ENCODE measurements at regions of chr12 and their contacts with region 1.

Region 1: GRCh38 chr12:7989827-7990551 is 42.5 kb upstream of the FOXJ2 start:
- DNase-seq: peak; percentile 52 to 75
- ATAC-seq: peak; percentile 92 to 98 (median 95)
- H3K4me3 ChIP-seq: no peak overlapping the region
- H3K4me3 Mint-ChIP-seq: peak overlapping the region; percentile 76
- H3K27ac ChIP-seq: peak overlapping the region; percentile 57
- H3K27ac Mint-ChIP-seq: peak overlapping the region; percentile 69 to 86
- H3K4me1 ChIP-seq: peaks cover 15% of the 10 kb centered on the region
- H3K4me1 Mint-ChIP-seq: peaks cover 20 to 21% of the 10 kb centered on the region in 2 donors
- H3K27me3 ChIP-seq: no peaks in the 10 kb centered on the region
- H3K27me3 Mint-ChIP-seq: no peaks in the 10 kb centered on the region
- CTCF ChIP-seq: no peak

Region 2: DNA sequence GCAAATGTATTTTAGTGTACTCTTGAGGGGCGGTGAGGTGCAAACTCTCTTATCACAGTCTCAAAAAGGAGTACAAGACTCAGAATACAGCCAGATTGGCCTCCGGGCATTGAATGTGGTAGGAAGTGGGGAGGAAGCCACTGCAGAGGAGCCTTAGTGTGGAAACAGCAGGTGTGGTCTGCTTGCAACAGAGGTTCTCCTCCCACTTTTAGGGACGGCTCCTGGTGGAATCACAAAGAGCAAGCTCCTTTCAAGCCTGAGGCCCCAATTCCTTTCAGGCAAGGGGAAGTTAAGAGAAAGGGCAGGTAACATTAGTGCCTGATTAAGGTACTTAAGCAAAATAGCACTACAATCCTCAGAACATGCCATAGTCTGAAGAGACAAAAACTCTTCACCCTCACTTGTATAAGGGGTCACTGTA is 30.3 kb before region 1 on chr12:
- intact Hi-C with region 1: loop called (anchors 1 kb)
- DNase-seq: peak; percentile 42 to 77
- ATAC-seq: peak; percentile 33 to 63 (median 45)
- H3K4me3 ChIP-seq: peak overlapping the region; percentile 46
- H3K4me3 Mint-ChIP-seq: peak overlapping the region; percentile 85
- H3K27ac ChIP-seq: peak overlapping the region; percentile 83
- H3K27ac Mint-ChIP-seq: peak overlapping the region; percentile 88 to 96
- H3K4me1 ChIP-seq: peaks cover 27% of the 10 kb centered on the region
- H3K4me1 Mint-ChIP-seq: peaks cover 32 to 38% of the 10 kb centered on the region in 2 donors
- H3K27me3 ChIP-seq: no peaks in the 10 kb centered on the region
- H3K27me3 Mint-ChIP-seq: no peaks in the 10 kb centered on the region
- CTCF ChIP-seq: no peak

Region 3: DNA sequence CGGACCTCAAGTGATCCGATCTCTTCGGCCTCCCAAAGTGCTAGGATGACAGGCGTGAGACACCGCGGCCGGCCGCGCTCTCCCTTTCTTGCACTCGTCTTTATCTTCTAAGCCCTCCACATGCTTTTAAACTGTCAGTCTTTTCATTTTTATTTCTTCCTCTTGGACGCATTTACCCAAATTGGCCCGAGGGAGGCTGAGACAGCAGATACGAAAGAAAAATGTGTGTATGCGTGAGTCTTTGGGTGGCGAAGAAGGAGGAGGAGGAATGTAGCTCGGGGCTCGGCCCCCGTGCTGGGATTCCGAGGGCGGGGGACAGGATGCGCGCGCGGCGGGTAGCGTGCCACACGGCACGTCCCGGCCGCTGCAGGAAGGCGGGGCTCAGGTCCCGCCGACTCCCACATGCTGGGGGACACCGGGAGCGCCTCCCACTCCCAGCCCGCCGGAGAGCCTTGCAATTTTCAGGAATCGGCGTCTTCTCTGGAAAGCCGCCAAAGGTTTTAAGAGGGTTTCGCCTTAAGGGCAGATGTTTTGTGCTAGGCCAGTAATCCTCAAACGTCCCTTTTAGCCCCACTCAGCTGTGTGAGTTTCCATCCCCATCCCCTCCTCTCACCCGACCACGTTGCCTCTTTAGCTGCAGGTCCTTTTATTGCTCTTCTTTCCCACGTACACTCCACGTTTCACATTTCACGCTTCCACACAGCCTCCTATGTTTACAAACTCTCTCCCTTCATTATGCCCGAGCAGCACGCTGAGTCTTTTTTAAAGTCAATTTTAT is 19.3 kb before region 1 on chr12:
- intact Hi-C with region 1: loop called (anchors 1 kb)
- DNase-seq: peak; percentile 69 to 95
- ATAC-seq: peak; percentile 91 to 96 (median 92)
- H3K4me3 ChIP-seq: peak overlapping the region; percentile 79
- H3K4me3 Mint-ChIP-seq: peak overlapping the region; percentile 82
- H3K27ac ChIP-seq: peak overlapping the region; percentile 98
- H3K27ac Mint-ChIP-seq: peak overlapping the region; percentile 86 to 90
- H3K4me1 ChIP-seq: peaks cover 24% of the 10 kb centered on the region
- H3K4me1 Mint-ChIP-seq: peaks cover 14 to 17% of the 10 kb centered on the region in 2 donors
- H3K27me3 ChIP-seq: no peaks in the 10 kb centered on the region
- H3K27me3 Mint-ChIP-seq: no peaks in the 10 kb centered on the region
- CTCF ChIP-seq: no peak

Region 4: GRCh38 chr12:8065991-8066594 is 76.1 kb after region 1 on chr12 and contains the start of gene C3AR1:
- intact Hi-C with region 1: no loop called
- DNase-seq: peak in 1 of 2 donors; percentile 82
- ATAC-seq: peak; percentile 96 to 99 (median 97)
- H3K4me3 ChIP-seq: peak within 1 kb of the TSS; percentile 25
- H3K4me3 Mint-ChIP-seq: peak within 1 kb of the TSS; percentile 91
- H3K27ac ChIP-seq: peak within 1 kb of the TSS; percentile 73
- H3K27ac Mint-ChIP-seq: peak within 1 kb of the TSS; percentile 89 to 98
- H3K4me1 ChIP-seq: peaks cover 13% of the 10 kb centered on the region
- H3K4me1 Mint-ChIP-seq: peaks cover 28 to 29% of the 10 kb centered on the region in 2 donors
- H3K27me3 ChIP-seq: no peaks in the 10 kb centered on the region
- H3K27me3 Mint-ChIP-seq: no peaks in the 10 kb centered on the region
- CTCF ChIP-seq: no peak
- total RNA-seq, gene C3AR1: 9.5 to 16.9 (median 13.0) TPM

Measured in natural killer cell (primary cell).